ENCODE measurements at regions of chr9 and their contacts with region 1.

Region 1: DNA sequence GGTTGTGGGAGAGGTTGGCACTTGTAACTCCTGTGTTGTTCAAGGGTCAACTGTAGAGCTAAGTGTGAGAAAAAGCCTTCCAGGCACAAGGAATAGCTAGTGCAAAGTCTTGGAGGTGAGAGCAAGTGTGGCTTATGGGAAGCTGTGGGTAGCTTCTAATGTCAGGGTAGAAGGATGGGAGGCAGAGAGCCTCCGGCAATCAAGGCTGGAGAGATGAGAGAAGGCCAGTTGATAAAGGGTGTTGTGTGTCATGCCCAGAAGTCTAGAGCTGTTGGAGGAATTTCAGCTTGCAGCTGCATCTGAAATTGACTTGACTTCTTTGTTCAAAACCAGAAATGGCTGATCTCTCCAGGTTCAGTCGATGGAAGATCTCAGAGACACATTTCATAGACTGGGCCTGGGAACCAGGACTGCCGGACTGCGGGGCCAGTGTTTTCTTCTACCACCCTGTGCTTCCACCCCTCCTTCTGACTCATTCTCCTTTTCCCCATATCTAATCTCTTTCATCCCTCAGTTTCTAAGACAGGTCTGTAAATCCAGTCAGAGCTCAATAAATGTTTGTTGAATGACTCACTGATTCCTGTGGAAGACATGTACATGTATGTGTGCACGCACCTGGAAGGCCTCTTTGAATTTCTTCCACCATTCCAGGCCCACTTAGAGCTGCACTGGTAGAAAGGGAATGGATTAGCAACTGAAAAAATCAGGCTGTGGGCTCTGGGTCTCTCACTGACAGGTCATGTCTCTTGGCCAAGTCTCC is 67.8 kb upstream of the KLF4 start:
- DNase-seq: no peak
- H3K4me3 ChIP-seq: no peak overlapping the region
- H3K27ac ChIP-seq: no peak overlapping the region
- H3K4me1 ChIP-seq: no peaks in the 10 kb centered on the region
- H3K27me3 ChIP-seq: no peaks in the 10 kb centered on the region
- CTCF ChIP-seq: no peak

Region 2: GRCh38 chr9:107600060-107600573 is 42.7 kb after region 1 on chr9:
- intact Hi-C with region 1: no loop called
- DNase-seq: no peak
- H3K4me3 ChIP-seq: no peak overlapping the region
- H3K27ac ChIP-seq: peak overlapping the region; percentile 80
- H3K4me1 ChIP-seq: peaks cover 23% of the 10 kb centered on the region
- H3K27me3 ChIP-seq: no peaks in the 10 kb centered on the region
- CTCF ChIP-seq: no peak

Region 3: GRCh38 chr9:107612136-107612535 is 54.7 kb after region 1 on chr9:
- intact Hi-C with region 1: loop called (anchors 10 kb)
- DNase-seq: peak; percentile 76
- H3K4me3 ChIP-seq: no peak overlapping the region
- H3K27ac ChIP-seq: peak overlapping the region; percentile 26
- H3K4me1 ChIP-seq: peaks cover 3% of the 10 kb centered on the region
- H3K27me3 ChIP-seq: no peaks in the 10 kb centered on the region
- CTCF ChIP-seq: no peak

Measured in left ventricle myocardium inferior (tissue), 1 donor.